ENCODE measurements at regions of chr10 and their contacts with region 1.

Region 1: GRCh38 chr10:72254813-72255568 is 18.7 kb upstream of the DDIT4 start:
- DNase-seq: peak in 6 of 10 donors; percentile 28 to 67 (median 41)
- ATAC-seq: peak; percentile 71 to 85
- H3K4me3 Mint-ChIP-seq: peak overlapping the region; percentile 66 to 92 (median 78)
- H3K27ac Mint-ChIP-seq: peak overlapping the region; percentile 93 to 98 (median 96)
- H3K4me1 Mint-ChIP-seq: peaks cover 47 to 89% (median 84%) of the 10 kb centered on the region in 4 donors
- H3K27me3 Mint-ChIP-seq: no peaks in the 10 kb centered on the region

Region 2: DNA sequence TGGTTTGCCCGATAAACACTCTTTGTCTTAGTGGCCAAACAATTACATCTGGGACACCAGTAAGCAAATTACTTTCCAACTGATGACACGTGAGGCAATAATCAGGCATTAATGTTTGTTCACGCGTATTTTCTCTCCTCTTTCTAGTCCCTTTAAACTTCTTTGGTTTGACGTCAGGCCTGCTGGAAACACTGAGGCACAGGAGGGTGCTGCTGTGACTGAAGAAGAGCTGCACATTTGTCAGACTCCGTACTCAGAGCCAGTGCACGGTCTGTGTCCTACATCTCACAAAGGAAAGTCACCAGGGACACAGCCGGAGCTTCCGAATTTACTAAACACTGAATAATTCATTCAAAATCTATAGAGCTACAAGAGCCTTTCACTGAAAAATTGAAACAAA is 96.8 kb before region 1 on chr10:
- POLR2A ChIA-PET with region 1: no interaction called
- DNase-seq: no peak
- ATAC-seq: no peak
- H3K4me3 Mint-ChIP-seq: no peak overlapping the region
- H3K27ac Mint-ChIP-seq: no peak overlapping the region
- H3K4me1 Mint-ChIP-seq: peaks cover 0 to 7% (median 3%) of the 10 kb centered on the region in 4 donors
- H3K27me3 Mint-ChIP-seq: no peaks in the 10 kb centered on the region

Region 3: DNA sequence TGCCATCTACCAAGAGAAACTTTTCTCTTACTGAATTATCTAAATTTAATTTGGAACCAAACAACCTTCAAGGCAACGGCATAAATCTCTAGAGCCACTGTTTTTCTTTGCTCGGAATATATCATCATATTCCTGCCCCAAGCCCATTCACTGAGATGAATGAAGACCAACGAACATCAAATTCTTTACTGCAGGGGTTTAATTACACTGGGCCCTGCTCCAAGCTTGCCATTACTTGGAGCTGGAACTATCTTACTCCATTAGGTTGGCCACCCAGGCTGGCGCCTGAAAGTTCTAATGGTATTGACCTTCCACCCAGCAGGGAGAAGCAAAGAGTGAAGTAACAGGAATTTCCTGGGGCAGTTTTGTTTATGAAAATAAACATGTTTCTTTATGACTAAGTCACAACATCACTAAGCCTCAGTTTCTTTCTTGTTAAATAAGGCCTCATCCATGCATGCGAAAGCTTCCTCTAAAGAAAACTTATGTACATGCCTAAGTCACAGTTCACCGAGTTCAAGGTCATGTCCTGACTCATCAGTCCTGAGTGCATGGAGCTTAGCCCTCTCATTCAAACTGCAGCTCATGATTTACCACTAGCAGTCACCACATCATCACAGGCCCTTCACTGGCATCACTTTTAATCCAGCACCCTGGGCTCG is 81.2 kb before region 1 on chr10:
- POLR2A ChIA-PET with region 1: no interaction called
- DNase-seq: no peak
- ATAC-seq: no peak
- H3K4me3 Mint-ChIP-seq: no peak overlapping the region
- H3K27ac Mint-ChIP-seq: no peak overlapping the region
- H3K4me1 Mint-ChIP-seq: peaks cover 4 to 15% (median 10%) of the 10 kb centered on the region in 4 donors
- H3K27me3 Mint-ChIP-seq: no peaks in the 10 kb centered on the region

Region 4: GRCh38 chr10:72200883-72201282 is 54.1 kb before region 1 on chr10:
- POLR2A ChIA-PET with region 1: no interaction called
- DNase-seq: no peak
- ATAC-seq: no peak
- H3K4me3 Mint-ChIP-seq: no peak overlapping the region
- H3K27ac Mint-ChIP-seq: no peak overlapping the region
- H3K4me1 Mint-ChIP-seq: peaks cover 0 to 7% (median under 1%) of the 10 kb centered on the region in 4 donors
- H3K27me3 Mint-ChIP-seq: no peaks in the 10 kb centered on the region

Region 5: GRCh38 chr10:72278668-72279393 is 23.8 kb after region 1 on chr10:
- POLR2A ChIA-PET with region 1: interaction called, 83 read pairs
- DNase-seq: no peak
- ATAC-seq: no peak
- H3K4me3 Mint-ChIP-seq: peak overlapping the region in 2 of 10 donors; percentile 15 to 46
- H3K27ac Mint-ChIP-seq: peak overlapping the region in 8 of 10 donors; percentile 57 to 97 (median 80)
- H3K4me1 Mint-ChIP-seq: peaks cover 24 to 55% (median 51%) of the 10 kb centered on the region in 4 donors
- H3K27me3 Mint-ChIP-seq: no peaks in the 10 kb centered on the region